ENCODE measurements at regions of chr16 and their contacts with region 1.

Region 1: GRCh38 chr16:78437352-78437968 is 338.0 kb downstream of the WWOX start:
- DNase-seq: peak in 1 of 5 donors; percentile 23
- ATAC-seq: no peak
- H3K4me3 ChIP-seq: no peak overlapping the region
- H3K27ac ChIP-seq: no peak overlapping the region
- H3K4me1 ChIP-seq: no peaks in the 10 kb centered on the region
- H3K27me3 ChIP-seq: no peaks in the 10 kb centered on the region
- CTCF ChIP-seq: peak; percentile 79 to 93 (median 88)
- POLR2A ChIP-seq: no peak

Region 2: GRCh38 chr16:78227855-78228254 is 209.6 kb before region 1 on chr16:
- intact Hi-C with region 1: loop called in 3 of 10 experiments (anchors 10 kb)
- DNase-seq: no peak
- ATAC-seq: no peak
- H3K4me3 ChIP-seq: no peak overlapping the region
- H3K27ac ChIP-seq: no peak overlapping the region
- H3K4me1 ChIP-seq: peaks cover 0 to under 1% (median 0%) of the 10 kb centered on the region in 12 donors
- H3K27me3 ChIP-seq: no peaks in the 10 kb centered on the region
- CTCF ChIP-seq: peak in 9 of 12 donors; percentile 18 to 49 (median 36)
- POLR2A ChIP-seq: no peak

Region 3: GRCh38 chr16:78249068-78249467 is 188.4 kb before region 1 on chr16:
- intact Hi-C with region 1: loop called in 1 of 10 experiments (anchors 1 kb)
- DNase-seq: peak in 2 of 5 donors; percentile 45
- ATAC-seq: peak in 2 of 4 donors; percentile 66 to 75
- H3K4me3 ChIP-seq: no peak overlapping the region
- H3K27ac ChIP-seq: no peak overlapping the region
- H3K4me1 ChIP-seq: no peaks in the 10 kb centered on the region
- H3K27me3 ChIP-seq: no peaks in the 10 kb centered on the region
- CTCF ChIP-seq: peak in 3 of 12 donors; percentile 9 to 31 (median 9)
- POLR2A ChIP-seq: no peak